ENCODE measurements at regions of chr5 and their contacts with region 1.

Region 1: DNA sequence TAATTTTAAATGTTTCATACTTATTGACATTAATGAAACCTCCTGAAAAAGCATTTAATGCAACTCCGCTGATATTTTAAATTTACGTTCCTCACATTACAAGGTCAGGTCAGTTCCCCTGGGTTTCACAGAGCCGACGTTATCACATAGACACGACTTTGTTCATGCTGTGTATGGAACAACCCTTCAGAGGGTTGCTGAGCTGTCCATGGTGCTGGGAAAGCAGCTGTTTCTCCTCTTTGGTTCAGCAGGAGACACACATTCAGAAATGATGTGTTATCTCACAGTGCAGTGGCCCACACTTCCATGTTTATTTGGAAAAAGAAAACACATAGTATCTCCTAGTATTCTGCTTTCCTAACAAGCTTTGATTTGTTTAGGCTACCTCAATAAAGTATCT is 53.5 kb downstream of the PPP2R2B start:
- DNase-seq: no peak
- ATAC-seq: no peak
- H3K4me3 ChIP-seq: no peak overlapping the region
- H3K27ac ChIP-seq: no peak overlapping the region
- H3K4me1 ChIP-seq: no peaks in the 10 kb centered on the region
- H3K27me3 ChIP-seq: no peaks in the 10 kb centered on the region; the same call in 1 of the 2 replicates
- CTCF ChIP-seq: no peak

Region 2: GRCh38 chr5:145762833-145763232 is 1062.2 kb before region 1 on chr5:
- CTCF ChIA-PET with region 1: no interaction called
- POLR2A ChIA-PET with region 1: interaction called, 14 read pairs
- in situ Hi-C with region 1: no loop called
- intact Hi-C with region 1: no loop called
- DNase-seq: no peak
- ATAC-seq: no peak
- H3K4me3 ChIP-seq: no peak overlapping the region
- H3K27ac ChIP-seq: no peak overlapping the region
- H3K4me1 ChIP-seq: no peaks in the 10 kb centered on the region
- H3K27me3 ChIP-seq: no peaks in the 10 kb centered on the region
- CTCF ChIP-seq: no peak

Measured in Panc1 (cell line).